ENCODE measurements at regions of chr11 and their contacts with region 1.

Region 1: GRCh38 chr11:37277896-37278465 is 679.9 kb upstream of the RAG2 start:
- DNase-seq: no peak
- ATAC-seq: no peak
- H3K4me3 ChIP-seq: no peak overlapping the region
- H3K27ac ChIP-seq: no peak overlapping the region
- H3K4me1 ChIP-seq: no peaks in the 10 kb centered on the region
- H3K27me3 ChIP-seq: no peaks in the 10 kb centered on the region
- CTCF ChIP-seq: no peak

Region 2: DNA sequence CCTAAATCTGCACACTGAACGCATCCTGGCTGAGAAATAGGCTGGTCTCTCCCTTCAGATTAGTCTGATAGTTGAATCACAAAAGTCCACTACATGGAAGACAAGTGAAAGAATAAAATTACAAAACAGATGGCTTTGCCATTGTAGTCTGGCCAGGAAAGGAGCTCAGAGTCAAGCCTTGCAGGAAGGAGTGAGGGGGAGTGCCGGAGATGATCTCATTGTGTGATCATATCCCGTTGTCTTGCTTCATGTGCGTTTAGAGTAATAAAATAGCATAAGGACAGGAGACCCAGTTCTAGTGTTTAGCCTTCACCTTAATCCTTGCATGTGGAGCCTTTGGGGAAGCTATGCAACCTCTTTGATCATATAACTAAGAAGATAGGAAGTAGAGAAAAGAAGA is 13.2 kb before region 1 on chr11:
- CTCF ChIA-PET with region 1: no interaction called
- POLR2A ChIA-PET with region 1: no interaction called
- intact Hi-C with region 1: loop called (anchors 2 kb)
- DNase-seq: peak; percentile 45
- ATAC-seq: peak; percentile 70
- H3K4me3 ChIP-seq: no peak overlapping the region
- H3K27ac ChIP-seq: no peak overlapping the region
- H3K4me1 ChIP-seq: 0 out of 2 replicates have a peak, but pooled peaks cover 8% of the 10 kb centered on the region
- H3K27me3 ChIP-seq: no peaks in the 10 kb centered on the region
- CTCF ChIP-seq: no peak